Mammary epithelial cell (primary cell): ENCODE measurements at regions of chr1 and their contacts with region 1.

Region 1: GRCh38 chr1:21184276-21184675 is 7.6 kb upstream of the EIF4G3 start:
- DNase-seq: no peak
- H3K4me3 ChIP-seq: no peak overlapping the region
- H3K27ac ChIP-seq: no peak overlapping the region
- H3K4me1 ChIP-seq: no peaks in the 10 kb centered on the region
- H3K27me3 ChIP-seq: no peaks in the 10 kb centered on the region
- CTCF ChIP-seq: no peak

Region 2: DNA sequence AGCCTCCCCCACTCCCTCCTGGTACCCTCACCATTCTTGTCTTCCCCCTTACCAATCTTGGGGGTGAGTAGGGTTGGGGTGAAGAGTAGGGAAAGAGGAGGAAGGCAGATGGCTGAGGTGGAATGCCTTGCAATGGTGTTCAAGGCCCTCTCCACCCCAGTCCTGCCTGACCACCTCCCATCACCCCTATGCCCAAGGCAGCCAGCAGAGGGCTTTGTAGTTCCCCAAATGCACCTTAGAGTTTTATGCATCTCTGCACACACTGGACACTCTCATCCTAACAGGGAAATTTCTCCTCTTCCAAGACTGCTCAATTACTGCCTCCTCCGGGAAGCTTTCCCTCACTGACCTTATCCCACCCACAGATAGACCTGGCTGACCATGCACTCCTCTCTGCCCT is 481.9 kb before region 1 on chr1:
- CTCF ChIA-PET with region 1: no interaction called
- dilution Hi-C with region 1: loop called (anchors 5 kb)
- in situ Hi-C with region 1: no loop called
- intact Hi-C with region 1: no loop called
- DNase-seq: no peak
- H3K4me3 ChIP-seq: no peak overlapping the region
- H3K27ac ChIP-seq: no peak overlapping the region
- H3K4me1 ChIP-seq: peaks cover 13% of the 10 kb centered on the region
- H3K27me3 ChIP-seq: no peaks in the 10 kb centered on the region
- CTCF ChIP-seq: peak; percentile 27 to 57

Region 3: DNA sequence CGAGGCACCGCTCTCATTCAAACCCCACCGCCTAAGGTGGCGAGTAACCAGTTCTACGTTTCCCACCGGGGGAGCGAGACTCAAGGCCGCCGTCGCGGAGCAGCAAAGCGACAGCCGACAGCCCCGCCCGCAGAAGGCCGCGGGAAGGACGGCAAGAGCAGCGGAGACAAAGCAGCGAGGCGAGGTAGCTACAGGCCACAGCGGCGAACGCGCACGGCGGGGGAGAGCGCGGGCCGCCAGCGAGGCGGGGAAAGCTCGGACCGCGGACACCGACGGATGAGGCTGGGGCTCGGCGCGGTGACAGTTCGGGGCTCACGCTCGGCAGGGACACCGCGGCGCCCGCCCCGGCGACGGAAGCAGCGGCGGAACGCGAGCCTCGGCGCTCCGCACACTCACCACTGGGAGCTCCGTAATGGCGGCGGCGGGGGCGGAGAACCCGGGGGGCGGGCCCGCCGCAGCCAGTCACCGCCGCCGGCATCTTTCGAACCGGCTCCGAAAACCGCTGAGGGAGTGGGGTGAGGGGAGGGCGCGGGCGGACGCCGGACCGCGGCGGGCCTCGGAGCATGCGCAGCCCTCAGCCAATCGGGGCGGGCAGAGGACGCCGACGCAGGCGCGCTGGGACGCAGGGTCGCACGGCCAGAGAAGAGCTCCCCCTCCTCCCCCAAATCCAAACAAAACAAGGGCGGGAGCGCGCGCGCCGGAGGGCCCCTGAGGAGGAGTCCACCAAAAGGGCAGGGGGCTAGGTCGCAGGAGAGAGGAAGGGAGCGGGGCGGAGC is 397.8 kb before region 1 on chr1:
- CTCF ChIA-PET with region 1: no interaction called
- dilution Hi-C with region 1: no loop called
- in situ Hi-C with region 1: no loop called
- intact Hi-C with region 1: no loop called
- DNase-seq: peak; percentile 95
- H3K4me3 ChIP-seq: peak overlapping the region; percentile 77 to 99 (median 94)
- H3K27ac ChIP-seq: peak overlapping the region; percentile 91
- H3K4me1 ChIP-seq: peaks cover 21% of the 10 kb centered on the region
- H3K27me3 ChIP-seq: no peaks in the 10 kb centered on the region
- CTCF ChIP-seq: peak in 1 of 2 donors; percentile 5

Region 4: DNA sequence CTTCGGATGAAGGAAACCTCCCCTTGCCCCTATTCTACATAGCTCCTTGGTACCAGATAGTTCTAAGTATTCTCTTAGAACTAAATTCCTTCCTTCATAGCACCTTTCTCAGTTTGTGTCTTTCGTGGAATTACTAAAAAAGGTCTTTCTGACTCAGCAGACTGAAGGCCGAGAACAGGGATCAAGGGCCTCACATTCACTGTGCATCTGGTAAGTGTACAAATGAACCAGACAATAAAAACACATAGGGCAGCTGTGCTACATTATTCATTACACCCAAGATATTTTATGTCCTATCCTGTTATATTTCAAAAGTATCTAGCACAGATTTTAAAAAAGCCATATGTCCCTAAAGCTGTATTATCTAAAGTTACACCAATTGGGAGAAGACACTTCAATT is 334.3 kb before region 1 on chr1:
- CTCF ChIA-PET with region 1: no interaction called
- dilution Hi-C with region 1: loop called (anchors 10 kb)
- in situ Hi-C with region 1: no loop called
- intact Hi-C with region 1: no loop called
- DNase-seq: no peak
- H3K4me3 ChIP-seq: no peak overlapping the region
- H3K27ac ChIP-seq: no peak overlapping the region
- H3K4me1 ChIP-seq: no peaks in the 10 kb centered on the region
- H3K27me3 ChIP-seq: no peaks in the 10 kb centered on the region
- CTCF ChIP-seq: no peak

Region 5: DNA sequence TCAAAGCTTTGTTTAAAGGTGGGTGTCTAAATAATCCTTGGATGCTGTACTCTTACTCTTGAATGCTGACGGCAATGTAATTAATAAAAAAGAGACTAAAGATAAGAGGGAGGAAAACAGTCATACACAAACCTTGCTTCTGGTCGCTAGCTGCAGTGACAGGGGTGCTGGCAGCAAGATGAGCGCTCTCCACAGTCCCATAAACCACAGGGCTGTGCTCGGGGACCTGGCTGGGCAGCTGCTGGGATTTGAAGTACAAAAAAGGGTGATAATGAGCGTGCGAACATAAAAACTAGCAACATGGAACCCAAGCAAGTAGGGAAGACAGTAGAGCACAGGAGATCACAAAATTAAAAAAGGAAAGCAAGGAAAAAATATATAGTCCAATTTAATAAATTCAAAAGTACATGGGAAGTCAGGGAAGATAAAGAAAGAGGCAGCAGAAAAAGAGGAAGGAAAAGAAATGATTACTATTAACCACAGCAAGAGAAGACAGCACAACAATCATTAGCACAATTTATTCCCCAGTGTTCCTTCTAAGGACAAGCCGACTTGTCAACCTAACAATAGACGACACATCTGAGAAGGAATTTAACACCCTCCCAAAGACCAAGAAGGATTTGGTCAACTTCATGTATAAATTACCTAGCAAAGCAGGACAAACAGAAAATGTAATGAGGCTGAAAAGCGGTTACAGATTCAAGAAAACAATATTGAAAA is 234.2 kb before region 1 on chr1:
- CTCF ChIA-PET with region 1: no interaction called
- dilution Hi-C with region 1: loop called (anchors 5 kb)
- in situ Hi-C with region 1: no loop called
- intact Hi-C with region 1: no loop called
- DNase-seq: no peak
- H3K4me3 ChIP-seq: no peak overlapping the region
- H3K27ac ChIP-seq: no peak overlapping the region
- H3K4me1 ChIP-seq: no peaks in the 10 kb centered on the region
- H3K27me3 ChIP-seq: no peaks in the 10 kb centered on the region
- CTCF ChIP-seq: no peak